ENCODE measurements at regions of chr1 and their contacts with region 1.

Region 1: GRCh38 chr1:25631750-25632485 is 15.3 kb downstream of the MAN1C1 start:
- DNase-seq: peak in 4 of 9 donors; percentile 3 to 35 (median 25)
- ATAC-seq: peak; percentile 44
- H3K4me3 ChIP-seq: peak overlapping the region; percentile 51
- H3K4me3 Mint-ChIP-seq: peak overlapping the region; percentile 63 to 96 (median 84)
- H3K27ac ChIP-seq: peak overlapping the region; percentile 86
- H3K27ac Mint-ChIP-seq: peak overlapping the region; percentile 79 to 100 (median 97)
- H3K4me1 ChIP-seq: peaks cover 6 to 48% of the 10 kb centered on the region in 2 donors
- H3K4me1 Mint-ChIP-seq: peaks cover 55 to 91% (median 82%) of the 10 kb centered on the region in 7 donors
- H3K27me3 ChIP-seq: no peaks in the 10 kb centered on the region
- H3K27me3 Mint-ChIP-seq: peaks cover 0 to 44% (median 0%) of the 10 kb centered on the region in 5 donors

Region 2: DNA sequence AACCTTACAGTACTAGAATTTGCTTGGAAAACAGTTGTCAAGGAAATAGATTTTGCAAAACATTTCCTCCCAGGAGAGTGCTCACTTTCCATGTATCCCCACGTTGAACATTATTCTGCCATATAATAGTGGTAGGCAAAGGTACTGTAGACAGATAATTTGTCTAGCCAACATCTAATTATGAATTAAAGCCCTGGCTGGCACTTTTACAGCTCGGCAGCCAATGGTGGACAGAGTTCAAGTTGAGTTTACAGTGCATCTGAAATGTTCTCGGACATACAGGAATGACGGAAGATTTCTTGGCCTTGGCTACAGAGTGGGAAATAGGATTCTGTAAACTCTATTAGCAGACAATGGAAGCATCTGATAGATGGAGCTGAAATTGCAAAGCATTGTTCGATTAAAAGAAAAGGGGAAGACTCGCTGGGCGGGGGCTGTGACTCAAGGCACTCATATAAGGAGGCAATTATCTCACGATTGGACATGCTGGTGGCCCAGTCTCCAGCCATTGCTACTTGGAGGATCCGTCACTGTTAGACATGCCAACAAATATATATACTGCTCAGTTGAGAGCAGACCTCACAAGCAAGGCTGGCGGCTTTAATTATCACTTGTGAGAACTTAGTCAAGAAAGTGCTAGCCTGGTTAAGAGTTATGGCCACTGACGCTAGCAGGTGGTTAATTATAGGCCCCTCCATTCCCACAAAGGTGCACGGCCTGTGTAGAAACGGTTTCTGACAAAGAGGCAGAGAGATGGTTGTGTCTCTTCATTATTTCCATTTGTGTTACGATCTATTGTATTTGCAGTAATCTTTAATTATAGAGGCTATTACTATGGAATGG is 32.7 kb after region 1 on chr1:
- CTCF ChIA-PET with region 1: interaction called, 3 read pairs
- POLR2A ChIA-PET with region 1: interaction called, 18 read pairs
- intact Hi-C with region 1: no loop called
- DNase-seq: no peak
- ATAC-seq: no peak
- H3K4me3 ChIP-seq: no peak overlapping the region
- H3K4me3 Mint-ChIP-seq: no peak overlapping the region
- H3K27ac ChIP-seq: peak overlapping the region; percentile 39
- H3K27ac Mint-ChIP-seq: peak overlapping the region in 8 of 9 donors; percentile 43 to 98 (median 96)
- H3K4me1 ChIP-seq: peaks cover 0 to 41% of the 10 kb centered on the region in 2 donors
- H3K4me1 Mint-ChIP-seq: peaks cover 23 to 89% (median 85%) of the 10 kb centered on the region in 7 donors
- H3K27me3 ChIP-seq: no peaks in the 10 kb centered on the region
- H3K27me3 Mint-ChIP-seq: peaks cover 0 to 69% (median 0%) of the 10 kb centered on the region in 5 donors

Region 3: GRCh38 chr1:25711555-25712298 is 79.8 kb after region 1 on chr1:
- CTCF ChIA-PET with region 1: no interaction called
- POLR2A ChIA-PET with region 1: no interaction called
- intact Hi-C with region 1: no loop called
- DNase-seq: peak in 7 of 9 donors; percentile 32 to 55 (median 49)
- ATAC-seq: peak; percentile 93
- H3K4me3 ChIP-seq: no peak overlapping the region
- H3K4me3 Mint-ChIP-seq: peak overlapping the region; percentile 20 to 76 (median 72)
- H3K27ac ChIP-seq: peak overlapping the region; percentile 58
- H3K27ac Mint-ChIP-seq: peak overlapping the region in 8 of 9 donors; percentile 64 to 90 (median 84)
- H3K4me1 ChIP-seq: peaks cover 8 to 66% of the 10 kb centered on the region in 2 donors
- H3K4me1 Mint-ChIP-seq: peaks cover 28 to 94% (median 78%) of the 10 kb centered on the region in 7 donors
- H3K27me3 ChIP-seq: no peaks in the 10 kb centered on the region
- H3K27me3 Mint-ChIP-seq: peaks cover 0 to 12% (median 0%) of the 10 kb centered on the region in 5 donors

Region 4: DNA sequence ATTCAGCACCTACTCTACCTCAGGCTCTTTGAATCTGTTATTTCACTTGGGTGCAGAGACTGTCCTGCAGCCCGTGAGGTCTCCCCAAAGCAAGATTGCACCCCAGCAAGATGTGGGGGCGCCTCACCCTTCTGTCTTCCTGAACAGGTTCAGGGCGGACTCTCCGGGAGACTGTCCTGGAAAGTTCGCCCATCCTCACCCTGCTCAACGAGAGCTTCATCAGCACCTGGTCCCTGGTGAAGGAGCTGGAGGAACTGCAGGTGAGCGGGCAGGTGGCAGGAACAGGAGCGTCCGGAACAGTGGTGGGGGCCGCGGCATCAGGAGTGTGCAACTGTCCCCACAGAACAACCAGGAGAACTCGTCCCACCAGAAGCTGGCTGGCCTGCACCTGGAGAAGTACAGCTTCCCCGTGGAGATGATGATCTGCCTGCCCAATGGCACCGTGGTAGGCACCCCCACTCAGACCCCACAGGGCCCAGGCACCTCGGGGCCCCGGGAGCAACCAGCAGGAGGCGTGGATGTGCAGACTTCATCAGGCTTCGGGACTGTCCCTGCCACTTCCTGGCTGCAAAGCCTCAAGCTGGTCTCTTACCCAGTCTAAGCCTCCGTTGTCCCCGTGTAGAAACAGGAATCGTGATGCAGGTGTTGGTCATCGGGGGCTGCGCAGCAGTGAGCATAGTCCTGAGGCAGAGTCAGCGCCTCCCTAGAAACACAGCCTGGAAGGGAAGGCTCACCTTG is 182.0 kb after region 1 on chr1:
- CTCF ChIA-PET with region 1: no interaction called
- POLR2A ChIA-PET with region 1: no interaction called
- intact Hi-C with region 1: no loop called
- DNase-seq: no peak
- ATAC-seq: no peak
- H3K4me3 ChIP-seq: no peak overlapping the region
- H3K4me3 Mint-ChIP-seq: no peak overlapping the region
- H3K27ac ChIP-seq: no peak overlapping the region
- H3K27ac Mint-ChIP-seq: no peak overlapping the region
- H3K4me1 ChIP-seq: peaks cover 1 to 16% of the 10 kb centered on the region in 2 donors
- H3K4me1 Mint-ChIP-seq: peaks cover 9 to 40% (median 16%) of the 10 kb centered on the region in 7 donors
- H3K27me3 ChIP-seq: no peaks in the 10 kb centered on the region
- H3K27me3 Mint-ChIP-seq: no peaks in the 10 kb centered on the region